ENCODE measurements at regions of chr1 and their contacts with region 1.

Region 1: GRCh38 chr1:216600730-216601609 is 122.3 kb downstream of the ESRRG start:
- DNase-seq: peak; percentile 78
- ATAC-seq: peak; percentile 94
- H3K4me3 ChIP-seq: peak overlapping the region; percentile 65
- H3K27ac ChIP-seq: peak overlapping the region; percentile 80
- H3K4me1 ChIP-seq: peaks cover 5% of the 10 kb centered on the region
- H3K27me3 ChIP-seq: no peaks in the 10 kb centered on the region
- CTCF ChIP-seq: peak; percentile 61
- POLR2A ChIP-seq: peak; percentile 53; the same call in 1 of the 2 replicates
- RAD21 ChIP-seq: peak; percentile 49

Region 2: DNA sequence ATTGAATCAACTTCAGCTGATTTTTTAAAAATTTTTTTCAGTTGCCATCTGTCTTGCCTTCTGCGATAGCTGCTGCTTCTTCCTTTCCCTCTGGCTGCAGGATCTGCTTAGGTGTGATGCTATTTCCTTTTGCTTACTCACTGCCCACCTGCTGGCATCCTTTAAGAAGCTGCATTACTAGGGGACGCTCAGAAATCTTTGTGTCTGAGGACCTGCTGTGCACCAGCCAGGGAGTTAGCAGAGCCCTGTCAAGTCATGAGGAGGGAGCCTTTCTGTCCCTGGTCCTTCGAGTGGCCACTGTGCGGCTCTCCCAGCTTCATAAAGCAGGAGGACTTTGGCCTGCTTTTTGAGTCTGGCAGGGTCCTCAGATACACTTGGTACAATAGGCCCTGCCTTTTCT is 505.6 kb before region 1 on chr1:
- CTCF ChIA-PET with region 1: no interaction called
- POLR2A ChIA-PET with region 1: no interaction called
- dilution Hi-C with region 1: no loop called
- in situ Hi-C with region 1: no loop called
- intact Hi-C with region 1: no loop called
- DNase-seq: no peak
- ATAC-seq: no peak
- H3K4me3 ChIP-seq: no peak overlapping the region
- H3K27ac ChIP-seq: no peak overlapping the region
- H3K4me1 ChIP-seq: no peaks in the 10 kb centered on the region
- H3K27me3 ChIP-seq: no peaks in the 10 kb centered on the region
- CTCF ChIP-seq: no peak
- POLR2A ChIP-seq: no peak
- RAD21 ChIP-seq: no peak

Region 3: GRCh38 chr1:216531263-216532239 is 69.4 kb before region 1 on chr1:
- CTCF ChIA-PET with region 1: no interaction called
- POLR2A ChIA-PET with region 1: no interaction called
- dilution Hi-C with region 1: no loop called
- in situ Hi-C with region 1: no loop called
- intact Hi-C with region 1: loop called (anchors 2 kb)
- DNase-seq: peak; percentile 41
- ATAC-seq: peak; percentile 78
- H3K4me3 ChIP-seq: peak overlapping the region; percentile 82
- H3K27ac ChIP-seq: peak overlapping the region; percentile 97
- H3K4me1 ChIP-seq: peaks cover 9% of the 10 kb centered on the region
- H3K27me3 ChIP-seq: no peaks in the 10 kb centered on the region
- CTCF ChIP-seq: no peak
- POLR2A ChIP-seq: no peak
- RAD21 ChIP-seq: no peak

Region 4: DNA sequence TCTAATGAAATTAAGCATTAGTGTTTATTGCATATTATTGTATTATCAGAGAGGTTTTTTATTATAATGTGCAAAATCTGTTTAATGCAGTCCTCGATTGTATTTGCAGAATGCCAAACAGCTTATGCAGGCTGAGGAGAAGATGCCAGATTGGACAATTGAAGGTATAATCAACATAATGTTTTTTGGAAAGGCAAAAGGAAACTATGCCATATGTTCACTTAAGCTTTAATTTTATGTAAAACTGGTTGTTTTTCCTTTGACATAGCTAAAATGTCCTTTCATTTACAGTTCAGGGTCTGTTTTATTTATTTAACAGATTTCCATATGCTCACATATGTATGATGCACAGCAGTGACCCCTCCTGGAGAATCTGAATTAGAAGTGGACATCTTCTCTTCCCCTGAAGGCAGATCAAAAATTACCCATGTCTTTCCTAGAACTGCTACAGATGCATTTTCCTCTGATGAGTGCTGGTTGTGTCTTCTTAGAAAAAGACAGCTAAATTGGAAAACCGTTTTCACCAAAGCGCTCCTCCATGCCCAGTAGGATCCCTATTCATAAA is 34.2 kb before region 1 on chr1:
- CTCF ChIA-PET with region 1: no interaction called
- POLR2A ChIA-PET with region 1: no interaction called
- dilution Hi-C with region 1: no loop called
- in situ Hi-C with region 1: no loop called
- intact Hi-C with region 1: no loop called
- DNase-seq: peak; percentile 45
- ATAC-seq: peak; percentile 62
- H3K4me3 ChIP-seq: no peak overlapping the region
- H3K27ac ChIP-seq: no peak overlapping the region
- H3K4me1 ChIP-seq: no peaks in the 10 kb centered on the region
- H3K27me3 ChIP-seq: no peaks in the 10 kb centered on the region
- CTCF ChIP-seq: peak; percentile 56
- POLR2A ChIP-seq: no peak
- RAD21 ChIP-seq: peak; percentile 56

Region 5: GRCh38 chr1:216742625-216743024 is 141.7 kb after region 1 on chr1:
- CTCF ChIA-PET with region 1: interaction called, 6 read pairs
- POLR2A ChIA-PET with region 1: no interaction called
- dilution Hi-C with region 1: no loop called
- in situ Hi-C with region 1: no loop called
- intact Hi-C with region 1: loop called (anchors 2 kb)
- DNase-seq: peak; percentile 30
- ATAC-seq: no peak
- H3K4me3 ChIP-seq: no peak overlapping the region
- H3K27ac ChIP-seq: no peak overlapping the region
- H3K4me1 ChIP-seq: no peaks in the 10 kb centered on the region
- H3K27me3 ChIP-seq: no peaks in the 10 kb centered on the region
- CTCF ChIP-seq: peak; percentile 53
- POLR2A ChIP-seq: no peak
- RAD21 ChIP-seq: peak; percentile 36

Region 6: DNA sequence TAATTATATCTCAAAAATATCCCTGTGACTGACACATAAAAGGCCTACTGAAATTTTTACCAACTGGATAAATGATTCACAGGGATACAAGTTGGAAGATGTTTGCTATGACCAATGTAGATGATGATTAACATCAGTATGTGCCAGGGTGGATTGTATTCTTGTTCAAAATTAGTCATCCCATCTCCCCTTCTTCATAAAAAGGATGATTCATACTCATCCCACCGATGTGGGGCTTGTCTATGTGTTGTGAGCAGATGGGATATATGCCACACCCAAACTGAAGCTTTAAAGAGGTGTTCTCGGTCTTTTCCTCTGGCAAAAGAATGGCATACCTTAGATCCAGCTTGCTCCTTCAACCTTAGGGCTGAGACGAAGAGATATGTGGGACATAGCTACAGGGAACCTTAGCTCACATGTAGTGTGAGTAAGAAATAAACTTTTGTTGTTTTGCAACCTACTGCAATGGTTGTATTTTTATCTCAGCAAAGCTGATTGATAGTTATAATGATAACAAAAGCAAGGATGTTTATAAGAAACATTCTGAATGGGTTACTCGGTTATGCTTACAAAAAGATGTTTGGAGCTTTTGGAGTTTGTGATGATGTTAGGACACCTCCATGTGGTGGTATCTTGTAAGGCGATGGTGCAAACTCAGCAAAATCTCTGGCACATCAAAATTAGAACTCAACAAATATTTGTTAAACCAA is 1059.5 kb after region 1 on chr1:
- CTCF ChIA-PET with region 1: no interaction called
- POLR2A ChIA-PET with region 1: no interaction called
- dilution Hi-C with region 1: no loop called
- in situ Hi-C with region 1: no loop called
- intact Hi-C with region 1: loop called (anchors 10 kb)
- DNase-seq: peak; percentile 90
- ATAC-seq: peak; percentile 93
- H3K4me3 ChIP-seq: no peak overlapping the region
- H3K27ac ChIP-seq: peak overlapping the region; percentile 74
- H3K4me1 ChIP-seq: peaks cover 5% of the 10 kb centered on the region
- H3K27me3 ChIP-seq: no peaks in the 10 kb centered on the region
- CTCF ChIP-seq: peak; percentile 78
- POLR2A ChIP-seq: no peak
- RAD21 ChIP-seq: peak; percentile 75